Endothelial cell of umbilical vein (primary cell): ENCODE measurements at regions of chr6 and their contacts with region 1.

Region 1: GRCh38 chr6:25223490-25223991 is 55.6 kb upstream of the CARMIL1 start:
- DNase-seq: peak; percentile 81
- H3K4me3 ChIP-seq: peak overlapping the region in 1 of 3 experiments; percentile 20
- H3K27ac ChIP-seq: no peak overlapping the region
- H3K4me1 ChIP-seq: peaks cover 6% of the 10 kb centered on the region
- H3K27me3 ChIP-seq: no peaks in the 10 kb centered on the region
- CTCF ChIP-seq: peak; percentile 68 to 72
- POLR2A ChIP-seq: no peak

Region 2: GRCh38 chr6:25138237-25139125 is 85.1 kb before region 1 on chr6:
- CTCF ChIA-PET with region 1: interaction called, 10 read pairs
- POLR2A ChIA-PET with region 1: no interaction called
- dilution Hi-C with region 1: no loop called
- intact Hi-C with region 1: no loop called
- DNase-seq: peak; percentile 84
- H3K4me3 ChIP-seq: peak overlapping the region; percentile 29 to 71 (median 43)
- H3K27ac ChIP-seq: peak overlapping the region; percentile 45
- H3K4me1 ChIP-seq: peaks cover 13% of the 10 kb centered on the region
- H3K27me3 ChIP-seq: no peaks in the 10 kb centered on the region
- CTCF ChIP-seq: peak in 1 of 2 donors; percentile 11
- POLR2A ChIP-seq: no peak

Region 3: GRCh38 chr6:25193460-25194171 is 29.9 kb before region 1 on chr6:
- CTCF ChIA-PET with region 1: interaction called, 17 read pairs
- POLR2A ChIA-PET with region 1: no interaction called
- dilution Hi-C with region 1: no loop called
- intact Hi-C with region 1: loop called (anchors 2 kb)
- DNase-seq: peak; percentile 96
- H3K4me3 ChIP-seq: peak overlapping the region in 1 of 3 experiments; percentile 45
- H3K27ac ChIP-seq: peak overlapping the region; percentile 93
- H3K4me1 ChIP-seq: peaks cover 22% of the 10 kb centered on the region
- H3K27me3 ChIP-seq: no peaks in the 10 kb centered on the region
- CTCF ChIP-seq: no peak
- POLR2A ChIP-seq: peak; percentile 35

Region 4: GRCh38 chr6:25278914-25279747 is 55.6 kb after region 1 on chr6 and contains the start of gene CARMIL1:
- CTCF ChIA-PET with region 1: interaction called, 13 read pairs
- POLR2A ChIA-PET with region 1: no interaction called
- dilution Hi-C with region 1: no loop called
- intact Hi-C with region 1: no loop called
- DNase-seq: peak; percentile 70
- H3K4me3 ChIP-seq: peak within 1 kb of the TSS; percentile 74 to 90 (median 87)
- H3K27ac ChIP-seq: peak within 1 kb of the TSS; percentile 18
- H3K4me1 ChIP-seq: peaks cover 10% of the 10 kb centered on the region
- H3K27me3 ChIP-seq: no peaks in the 10 kb centered on the region
- CTCF ChIP-seq: peak; percentile 50 to 84
- POLR2A ChIP-seq: no peak
- total RNA-seq, gene CARMIL1: 8.7 and 8.8 TPM in 2 replicates

Region 5: GRCh38 chr6:25564943-25565342 is 341.4 kb after region 1 on chr6:
- CTCF ChIA-PET with region 1: interaction called, 15 read pairs
- POLR2A ChIA-PET with region 1: no interaction called
- dilution Hi-C with region 1: no loop called
- intact Hi-C with region 1: no loop called
- DNase-seq: no peak
- H3K4me3 ChIP-seq: no peak overlapping the region
- H3K27ac ChIP-seq: no peak overlapping the region
- H3K4me1 ChIP-seq: no peaks in the 10 kb centered on the region
- H3K27me3 ChIP-seq: no peaks in the 10 kb centered on the region
- CTCF ChIP-seq: no peak
- POLR2A ChIP-seq: no peak

Region 6: GRCh38 chr6:25889877-25890853 is 666.6 kb after region 1 on chr6:
- CTCF ChIA-PET with region 1: interaction called, 9 read pairs
- POLR2A ChIA-PET with region 1: no interaction called
- dilution Hi-C with region 1: no loop called
- intact Hi-C with region 1: loop called (anchors 2 kb)
- DNase-seq: peak; percentile 73
- H3K4me3 ChIP-seq: no peak overlapping the region
- H3K27ac ChIP-seq: no peak overlapping the region
- H3K4me1 ChIP-seq: no peaks in the 10 kb centered on the region
- H3K27me3 ChIP-seq: peaks cover 0 to 1% of the 10 kb centered on the region in 2 experiments
- CTCF ChIP-seq: peak; percentile 16 to 17
- POLR2A ChIP-seq: no peak